PC-3 (cell line): ENCODE measurements at regions of chr10 and their contacts with region 1.

Region 1: DNA sequence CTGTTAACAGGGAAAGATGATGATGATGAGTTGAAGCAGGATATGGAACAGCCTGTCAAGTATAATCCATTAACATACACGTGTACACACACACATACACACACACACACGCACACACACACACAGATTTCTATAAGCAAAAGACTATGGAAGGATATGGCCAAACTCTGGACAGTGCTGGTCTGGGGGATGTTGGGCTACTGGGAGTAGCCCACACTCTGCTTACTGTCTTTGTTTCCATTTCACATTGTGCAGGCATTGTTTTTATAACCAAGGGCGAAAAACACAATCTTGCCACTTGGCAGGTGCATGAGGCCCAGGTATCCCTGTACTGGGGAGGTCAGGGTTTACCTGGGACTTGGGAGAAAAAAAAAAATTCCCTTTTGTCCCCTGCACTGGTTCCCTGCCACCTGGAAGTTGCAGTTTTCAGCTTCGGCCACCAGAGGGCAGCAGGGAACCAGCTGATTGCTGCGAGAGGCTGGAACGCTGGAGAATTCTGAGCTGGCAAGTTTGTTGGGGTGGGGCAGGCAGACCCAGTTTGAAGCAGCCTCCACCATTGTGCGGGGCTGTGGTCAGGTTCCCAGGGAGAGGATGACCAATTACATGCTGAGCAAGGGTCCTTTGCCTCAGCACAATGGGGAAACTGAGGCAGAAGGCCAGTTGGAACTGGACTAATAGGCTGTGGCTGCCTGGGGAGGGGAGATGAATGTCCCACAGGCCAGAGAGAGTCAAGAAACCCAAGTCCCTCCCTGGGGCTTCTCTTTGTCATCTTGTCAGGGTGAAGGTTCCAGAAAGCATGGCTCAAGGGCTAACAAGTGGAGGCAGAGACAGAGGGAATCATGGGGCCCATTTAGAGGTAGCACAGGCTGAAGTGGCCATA is 27.3 kb downstream of the PPIF start:
- DNase-seq: peak; percentile 100
- ATAC-seq: peak; percentile 81
- H3K4me3 ChIP-seq: no peak overlapping the region
- H3K27ac ChIP-seq: no peak overlapping the region
- H3K4me1 ChIP-seq: peaks cover 10% of the 10 kb centered on the region
- H3K27me3 ChIP-seq: no peaks in the 10 kb centered on the region
- CTCF ChIP-seq: peak; percentile 100

Region 2: GRCh38 chr10:79411546-79412495 is 37.3 kb after region 1 on chr10:
- CTCF ChIA-PET with region 1: interaction called, 10 read pairs
- POLR2A ChIA-PET with region 1: no interaction called
- intact Hi-C with region 1: no loop called
- DNase-seq: no peak
- ATAC-seq: no peak
- H3K4me3 ChIP-seq: no peak overlapping the region
- H3K27ac ChIP-seq: no peak overlapping the region
- H3K4me1 ChIP-seq: peaks cover 21% of the 10 kb centered on the region
- H3K27me3 ChIP-seq: no peaks in the 10 kb centered on the region
- CTCF ChIP-seq: no peak

Region 3: GRCh38 chr10:79463578-79464496 is 89.3 kb after region 1 on chr10:
- CTCF ChIA-PET with region 1: interaction called, 68 read pairs
- POLR2A ChIA-PET with region 1: no interaction called
- intact Hi-C with region 1: loop called (anchors 1 kb)
- DNase-seq: no peak
- ATAC-seq: no peak
- H3K4me3 ChIP-seq: no peak overlapping the region
- H3K27ac ChIP-seq: no peak overlapping the region
- H3K4me1 ChIP-seq: no peaks in the 10 kb centered on the region
- H3K27me3 ChIP-seq: no peaks in the 10 kb centered on the region
- CTCF ChIP-seq: no peak

Region 4: DNA sequence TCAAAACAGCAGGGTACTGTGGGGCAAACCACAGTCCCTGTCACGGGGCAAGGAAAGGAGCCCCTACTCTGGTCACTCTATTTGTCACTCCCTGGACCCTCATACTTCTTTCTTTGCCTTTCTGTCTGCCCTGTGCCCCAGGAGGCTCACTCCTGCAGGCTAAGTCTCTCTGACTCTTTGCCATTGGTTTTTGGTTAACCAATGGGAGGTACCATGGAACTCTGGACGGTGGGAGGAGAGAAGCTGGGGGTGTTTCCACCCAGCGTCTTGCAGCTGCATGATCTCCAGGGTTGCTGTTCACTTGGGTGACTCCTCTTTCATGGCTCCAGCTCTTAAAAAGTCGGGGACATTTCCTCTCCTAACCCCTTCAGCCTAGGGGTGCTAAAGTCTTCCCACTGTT is 122.3 kb after region 1 on chr10:
- CTCF ChIA-PET with region 1: interaction called, 35 read pairs
- POLR2A ChIA-PET with region 1: interaction called, 10 read pairs
- intact Hi-C with region 1: loop called (anchors 1 kb)
- DNase-seq: no peak
- ATAC-seq: no peak; the same call in 1 of the 2 replicates
- H3K4me3 ChIP-seq: no peak overlapping the region
- H3K27ac ChIP-seq: no peak overlapping the region
- H3K4me1 ChIP-seq: no peaks in the 10 kb centered on the region
- H3K27me3 ChIP-seq: peaks cover 23% of the 10 kb centered on the region
- CTCF ChIP-seq: no peak

Region 5: DNA sequence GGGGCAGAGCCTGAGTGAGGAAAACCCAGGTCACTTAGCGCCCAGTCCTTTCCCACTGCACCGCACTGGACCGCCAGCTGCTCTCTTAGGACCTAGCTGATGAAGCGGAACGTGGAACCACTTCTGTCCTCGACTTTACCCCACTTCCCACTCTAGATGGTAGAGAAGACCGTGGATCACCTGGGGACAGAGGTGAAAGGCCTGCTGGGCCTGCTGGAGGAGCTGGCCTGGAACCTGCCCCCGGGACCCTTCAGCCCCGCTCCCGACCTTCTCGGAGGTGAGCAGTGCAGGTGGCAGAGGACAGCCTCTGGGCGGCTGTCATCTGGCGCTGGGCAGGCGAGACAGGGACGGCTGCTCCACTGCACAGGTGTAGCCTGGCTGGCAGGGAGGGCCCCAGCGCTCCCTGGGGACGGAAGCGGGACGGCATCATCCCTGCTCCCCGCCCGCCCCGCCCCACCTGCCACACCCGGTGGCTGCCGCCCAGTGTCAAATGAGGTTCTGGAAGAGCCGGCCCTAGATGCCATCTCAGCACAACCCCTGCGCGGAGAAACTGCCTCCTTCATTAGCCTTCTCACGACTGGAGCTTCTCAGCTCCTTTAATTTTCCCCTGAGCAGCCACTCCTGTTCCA is 769.6 kb after region 1 on chr10:
- CTCF ChIA-PET with region 1: interaction called, 13 read pairs
- POLR2A ChIA-PET with region 1: no interaction called
- intact Hi-C with region 1: loop called (anchors 2 kb)
- DNase-seq: peak; percentile 97
- ATAC-seq: peak; percentile 77
- H3K4me3 ChIP-seq: peak overlapping the region; percentile 64
- H3K27ac ChIP-seq: peak overlapping the region; percentile 17
- H3K4me1 ChIP-seq: peaks cover 24% of the 10 kb centered on the region
- H3K27me3 ChIP-seq: no peaks in the 10 kb centered on the region; the same call in 1 of the 2 replicates
- CTCF ChIP-seq: peak; percentile 4; the same call in 1 of the 2 replicates